ENCODE measurements at regions of chr13 and their contacts with region 1.

Region 1: GRCh38 chr13:41666644-41667043 is 209.3 kb downstream of the RGCC start:
- DNase-seq: no peak
- H3K4me3 ChIP-seq: no peak overlapping the region
- H3K27ac ChIP-seq: no peak overlapping the region
- H3K4me1 ChIP-seq: no peaks in the 10 kb centered on the region
- H3K27me3 ChIP-seq: no peaks in the 10 kb centered on the region
- CTCF ChIP-seq: no peak
- POLR2A ChIP-seq: no peak

Region 2: DNA sequence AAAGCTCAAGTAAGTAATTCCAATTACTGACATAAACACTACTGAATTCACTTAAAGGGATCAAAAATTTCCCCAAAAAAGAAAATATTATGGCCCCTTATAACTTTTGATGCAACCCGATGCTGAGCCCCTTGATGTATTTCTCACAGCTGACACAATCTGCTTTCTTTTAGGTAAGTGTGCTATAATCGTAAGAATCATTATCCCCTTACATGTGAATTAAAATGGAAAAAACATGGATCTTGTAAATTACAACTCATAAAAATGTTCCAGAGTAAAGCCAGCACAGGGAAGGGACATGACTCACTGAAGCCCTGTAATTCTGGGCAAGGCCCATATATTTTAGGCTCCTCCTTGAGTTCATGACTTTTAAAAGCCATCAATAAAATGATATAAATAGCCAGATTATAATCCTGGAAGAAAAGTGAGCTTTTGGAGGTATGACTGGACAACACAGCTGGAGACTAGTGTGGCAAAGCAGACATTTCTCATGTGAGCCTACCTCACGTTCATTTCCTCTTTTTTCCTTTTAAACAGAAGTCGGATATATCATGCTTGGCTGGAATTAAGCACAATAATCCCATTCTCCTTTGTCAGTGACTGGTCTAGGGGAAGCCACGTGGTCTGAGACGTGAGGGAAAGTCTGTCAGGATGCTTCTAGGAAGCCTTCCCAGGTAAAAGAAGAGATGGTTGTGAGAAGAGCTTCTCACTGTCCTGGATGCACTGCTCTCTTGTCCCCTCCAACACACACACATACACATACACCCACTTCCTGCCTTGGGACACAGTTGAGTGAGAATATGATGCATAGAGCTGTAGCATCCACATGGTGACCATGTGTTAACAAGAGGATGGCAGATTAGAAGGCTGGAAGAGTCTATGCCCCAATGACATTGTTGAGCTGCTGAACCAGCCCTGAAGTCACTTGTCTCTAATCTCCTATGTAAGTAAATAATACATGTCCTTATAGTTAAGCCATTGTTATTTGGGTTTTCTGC is 43.9 kb before region 1 on chr13:
- intact Hi-C with region 1: no loop called
- DNase-seq: no peak
- H3K4me3 ChIP-seq: no peak overlapping the region
- H3K27ac ChIP-seq: peak overlapping the region; percentile 8 to 29
- H3K4me1 ChIP-seq: no peaks in the 10 kb centered on the region
- H3K27me3 ChIP-seq: no peaks in the 10 kb centered on the region
- CTCF ChIP-seq: no peak
- POLR2A ChIP-seq: no peak

Region 3: DNA sequence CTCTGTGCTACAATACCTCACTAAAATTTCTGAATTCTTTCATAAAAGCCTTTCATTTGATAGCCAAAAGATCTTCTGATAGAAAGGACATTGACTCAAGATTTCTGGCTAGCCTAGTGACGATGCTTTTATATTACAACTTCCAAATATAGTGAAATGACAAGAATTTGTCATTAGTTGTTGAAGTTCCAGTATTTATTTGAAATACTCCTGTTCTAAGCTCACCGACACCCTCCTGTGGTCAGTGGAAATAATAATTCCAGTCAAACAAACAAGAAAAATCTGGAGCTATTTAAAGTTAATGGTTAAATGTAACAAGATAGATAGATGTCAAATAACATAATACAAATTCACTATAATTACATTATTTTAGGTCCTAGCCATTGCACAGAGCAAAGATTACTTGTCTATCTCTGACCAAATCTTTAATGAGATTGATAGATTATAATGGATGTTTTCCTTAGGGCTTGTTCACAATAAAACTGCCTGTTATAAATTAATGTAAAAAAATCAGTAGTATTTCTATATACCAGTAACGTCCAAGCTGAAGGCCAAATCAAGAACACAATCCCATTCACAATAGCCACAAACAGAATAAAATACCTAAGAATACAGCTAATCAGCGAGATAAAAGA is 13.8 kb before region 1 on chr13:
- intact Hi-C with region 1: loop called (anchors 2 kb)
- DNase-seq: no peak
- H3K4me3 ChIP-seq: no peak overlapping the region
- H3K27ac ChIP-seq: no peak overlapping the region
- H3K4me1 ChIP-seq: no peaks in the 10 kb centered on the region
- H3K27me3 ChIP-seq: no peaks in the 10 kb centered on the region
- CTCF ChIP-seq: peak; percentile 44 to 69 (median 65)
- POLR2A ChIP-seq: no peak